Caco-2 (cell line): ENCODE measurements at regions of chr16 and their contacts with region 1.

Region 1: DNA sequence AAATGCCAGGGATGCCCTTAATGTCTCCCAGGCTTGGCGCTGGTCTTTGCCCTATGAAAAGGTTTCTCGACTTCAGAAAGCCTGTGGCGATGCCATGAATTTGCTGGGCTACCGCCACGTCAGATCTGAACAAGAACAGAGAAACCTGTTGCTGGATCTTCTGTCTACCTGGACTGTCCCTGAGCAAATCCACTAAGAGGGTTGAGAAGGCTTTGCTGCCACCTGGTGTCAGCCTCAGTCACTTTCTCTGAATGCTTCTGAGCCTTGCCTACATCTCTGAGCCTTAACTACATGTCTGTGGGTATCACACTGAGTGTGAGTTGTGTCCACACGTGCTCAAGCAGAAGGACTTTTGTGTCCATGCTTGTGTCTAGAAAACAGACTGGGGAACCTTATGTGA is 11.4 kb downstream of the CHST4 start:
- DNase-seq: peak; percentile 62 to 71
- H3K4me3 ChIP-seq: no peak overlapping the region
- H3K4me3 Mint-ChIP-seq: no peak overlapping the region
- H3K27ac Mint-ChIP-seq: no peak overlapping the region
- H3K4me1 ChIP-seq: no peaks in the 10 kb centered on the region
- H3K4me1 Mint-ChIP-seq: no peaks in the 10 kb centered on the region
- H3K27me3 ChIP-seq: no peaks in the 10 kb centered on the region
- H3K27me3 Mint-ChIP-seq: peaks cover 14% of the 10 kb centered on the region
- CTCF ChIP-seq: peak; percentile 53 to 88

Region 2: GRCh38 chr16:71412270-71413160 is 125.1 kb before region 1 on chr16:
- CTCF ChIA-PET with region 1: interaction called, 3 read pairs
- POLR2A ChIA-PET with region 1: no interaction called
- intact Hi-C with region 1: loop called (anchors 1 kb)
- DNase-seq: peak; percentile 74 to 81
- H3K4me3 ChIP-seq: no peak overlapping the region
- H3K4me3 Mint-ChIP-seq: no peak overlapping the region
- H3K27ac Mint-ChIP-seq: no peak overlapping the region
- H3K4me1 ChIP-seq: peaks cover 9% of the 10 kb centered on the region; the same call in 1 of the 2 replicates
- H3K4me1 Mint-ChIP-seq: no peaks in the 10 kb centered on the region
- H3K27me3 ChIP-seq: no peaks in the 10 kb centered on the region; the same call in 1 of the 2 replicates
- H3K27me3 Mint-ChIP-seq: peaks cover 36% of the 10 kb centered on the region
- CTCF ChIP-seq: peak; percentile 84 to 92

Region 3: DNA sequence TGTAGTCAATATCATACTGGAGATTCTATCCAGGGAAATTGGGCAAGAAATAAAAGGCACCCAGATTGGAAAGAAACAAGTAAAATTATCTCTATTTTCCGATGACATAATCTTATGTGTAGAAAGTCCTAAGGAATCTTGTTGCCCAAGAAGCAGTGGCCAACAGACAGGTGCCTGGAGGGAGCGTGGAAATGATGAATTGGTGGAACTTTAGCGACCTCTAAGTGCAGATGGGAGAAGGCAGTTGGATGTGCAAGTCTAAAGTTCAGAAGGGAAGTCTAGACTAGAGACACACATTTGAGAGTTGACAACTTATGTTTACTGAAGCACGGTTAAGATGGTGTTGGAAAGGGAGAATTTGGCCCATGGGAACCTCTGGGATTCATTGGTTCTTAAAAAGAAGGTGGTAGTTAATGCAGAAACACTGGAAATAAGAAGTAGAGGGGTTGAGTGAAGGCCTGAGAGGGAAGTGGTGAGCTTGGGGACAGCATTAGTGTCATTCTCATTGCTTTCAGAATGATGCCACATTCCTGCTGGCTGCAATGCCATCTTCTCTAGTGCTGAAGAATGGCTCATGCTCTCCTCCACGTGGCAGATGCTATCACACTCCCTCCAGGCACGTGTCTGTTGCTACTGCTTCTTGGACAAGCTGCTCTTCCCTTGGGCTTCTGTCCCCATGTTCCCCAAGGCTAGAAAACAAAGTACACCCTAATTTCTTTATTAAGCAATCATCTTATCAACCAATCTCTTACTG is 15.2 kb after region 1 on chr16:
- CTCF ChIA-PET with region 1: no interaction called
- POLR2A ChIA-PET with region 1: no interaction called
- intact Hi-C with region 1: no loop called
- DNase-seq: peak in 1 of 2 experiments; percentile 48
- H3K4me3 ChIP-seq: no peak overlapping the region
- H3K4me3 Mint-ChIP-seq: no peak overlapping the region
- H3K27ac Mint-ChIP-seq: no peak overlapping the region
- H3K4me1 ChIP-seq: no peaks in the 10 kb centered on the region
- H3K4me1 Mint-ChIP-seq: peaks cover 6% of the 10 kb centered on the region
- H3K27me3 ChIP-seq: no peaks in the 10 kb centered on the region
- H3K27me3 Mint-ChIP-seq: peaks cover 10% of the 10 kb centered on the region
- CTCF ChIP-seq: peak in 1 of 2 experiments; percentile 17